ENCODE measurements at regions of chr21 and their contacts with region 1.

Region 1: DNA sequence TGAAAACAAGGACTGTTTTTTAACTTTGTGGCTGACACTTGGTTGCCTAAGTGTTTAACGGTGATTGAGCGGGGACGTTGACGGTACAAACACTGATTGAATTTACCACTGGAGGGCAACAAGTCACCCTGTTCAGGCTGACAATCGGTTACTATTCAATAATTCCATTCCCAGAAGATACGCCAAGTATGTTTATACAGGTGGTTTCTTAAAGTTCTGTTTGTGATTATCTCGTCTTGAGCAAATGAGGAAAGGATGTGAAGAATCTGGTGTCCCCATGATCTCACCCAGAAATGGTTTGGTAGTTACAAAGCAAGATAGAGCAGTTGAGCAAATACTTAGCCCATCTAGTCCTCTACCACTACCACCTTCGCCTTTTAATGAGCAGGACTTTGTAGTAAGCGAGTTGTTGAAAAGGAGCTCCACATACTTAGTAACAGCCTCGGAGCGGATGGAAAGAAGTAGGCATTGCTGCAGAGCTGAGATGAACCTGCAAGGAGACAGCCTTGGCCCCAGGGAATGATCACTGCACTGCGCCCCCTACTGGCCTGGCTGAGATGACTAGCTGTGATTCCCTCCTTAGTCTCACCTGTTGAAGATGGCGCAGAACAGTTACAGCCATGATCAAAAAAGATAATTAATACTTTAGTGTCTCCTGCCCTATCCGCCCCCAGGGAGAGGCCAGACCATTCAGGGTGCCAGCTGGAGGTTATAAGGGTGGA is 36.3 kb downstream of the IFNAR1 start:
- DNase-seq: peak; percentile 94
- ATAC-seq: peak; percentile 88
- H3K4me3 Mint-ChIP-seq: peak overlapping the region; percentile 72
- H3K27ac Mint-ChIP-seq: peak overlapping the region; percentile 75
- H3K4me1 Mint-ChIP-seq: peaks cover 16% of the 10 kb centered on the region
- H3K27me3 Mint-ChIP-seq: no peaks in the 10 kb centered on the region

Region 2: DNA sequence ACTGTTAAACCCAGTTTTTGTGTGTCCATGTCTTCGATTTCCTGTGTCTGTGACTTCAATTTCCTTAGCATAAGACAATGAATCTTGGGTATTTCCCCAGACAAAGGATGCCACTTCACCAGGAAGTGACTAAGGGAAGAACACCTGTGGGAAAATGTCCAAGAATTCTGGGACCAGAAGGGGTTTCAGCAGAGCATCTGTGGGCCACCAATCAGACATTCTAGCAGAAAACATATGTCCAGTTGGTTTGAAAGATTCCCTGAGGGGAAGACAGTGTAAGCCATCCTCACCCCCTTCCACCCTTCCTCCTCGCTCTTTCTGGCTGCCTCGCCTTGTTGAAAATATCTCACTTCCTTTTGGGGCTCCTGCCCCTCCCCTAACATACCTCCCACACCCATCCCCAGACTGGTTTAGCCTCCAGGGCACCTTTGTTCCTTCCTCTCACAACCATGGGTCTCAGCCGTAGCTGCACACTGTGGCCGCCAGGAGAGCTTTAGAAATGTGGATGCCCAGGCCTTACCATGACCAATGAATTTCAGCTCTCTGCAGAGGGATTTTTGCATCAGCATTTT is 61.8 kb before region 1 on chr21:
- CTCF ChIA-PET with region 1: interaction called, 11 read pairs
- POLR2A ChIA-PET with region 1: no interaction called
- intact Hi-C with region 1: no loop called
- DNase-seq: peak; percentile 69
- ATAC-seq: peak; percentile 90
- H3K4me3 Mint-ChIP-seq: peak overlapping the region; percentile 19
- H3K27ac Mint-ChIP-seq: peak overlapping the region; percentile 85
- H3K4me1 Mint-ChIP-seq: peaks cover 44% of the 10 kb centered on the region
- H3K27me3 Mint-ChIP-seq: no peaks in the 10 kb centered on the region

Region 3: GRCh38 chr21:33332143-33332542 is 28.9 kb before region 1 on chr21:
- CTCF ChIA-PET with region 1: interaction called, 12 read pairs
- POLR2A ChIA-PET with region 1: no interaction called
- intact Hi-C with region 1: no loop called
- DNase-seq: no peak
- ATAC-seq: peak; percentile 51
- H3K4me3 Mint-ChIP-seq: no peak overlapping the region
- H3K27ac Mint-ChIP-seq: peak overlapping the region; percentile 1
- H3K4me1 Mint-ChIP-seq: peaks cover 65% of the 10 kb centered on the region
- H3K27me3 Mint-ChIP-seq: no peaks in the 10 kb centered on the region

Region 4: GRCh38 chr21:33374450-33375096 is 13.5 kb after region 1 on chr21:
- CTCF ChIA-PET with region 1: interaction called, 24 read pairs
- POLR2A ChIA-PET with region 1: no interaction called
- intact Hi-C with region 1: no loop called
- DNase-seq: peak; percentile 75
- ATAC-seq: peak; percentile 83
- H3K4me3 Mint-ChIP-seq: no peak overlapping the region
- H3K27ac Mint-ChIP-seq: no peak overlapping the region
- H3K4me1 Mint-ChIP-seq: peaks cover 13% of the 10 kb centered on the region
- H3K27me3 Mint-ChIP-seq: peaks cover 2% of the 10 kb centered on the region

Region 5: GRCh38 chr21:33434770-33435360 is 73.8 kb after region 1 on chr21:
- CTCF ChIA-PET with region 1: interaction called, 17 read pairs
- POLR2A ChIA-PET with region 1: interaction called, 4 read pairs
- intact Hi-C with region 1: loop called in 1 of 2 experiments (anchors 2 kb)
- DNase-seq: peak; percentile 53
- ATAC-seq: peak; percentile 96
- H3K4me3 Mint-ChIP-seq: peak overlapping the region; percentile 4
- H3K27ac Mint-ChIP-seq: peak overlapping the region; percentile 59
- H3K4me1 Mint-ChIP-seq: peaks cover 26% of the 10 kb centered on the region
- H3K27me3 Mint-ChIP-seq: no peaks in the 10 kb centered on the region

Region 6: GRCh38 chr21:33514229-33514628 is 153.2 kb after region 1 on chr21:
- CTCF ChIA-PET with region 1: no interaction called
- POLR2A ChIA-PET with region 1: no interaction called
- intact Hi-C with region 1: no loop called
- DNase-seq: no peak
- ATAC-seq: peak; percentile 71
- H3K4me3 Mint-ChIP-seq: no peak overlapping the region
- H3K27ac Mint-ChIP-seq: peak overlapping the region; percentile 55
- H3K4me1 Mint-ChIP-seq: peaks cover 13% of the 10 kb centered on the region
- H3K27me3 Mint-ChIP-seq: no peaks in the 10 kb centered on the region

Region 7: DNA sequence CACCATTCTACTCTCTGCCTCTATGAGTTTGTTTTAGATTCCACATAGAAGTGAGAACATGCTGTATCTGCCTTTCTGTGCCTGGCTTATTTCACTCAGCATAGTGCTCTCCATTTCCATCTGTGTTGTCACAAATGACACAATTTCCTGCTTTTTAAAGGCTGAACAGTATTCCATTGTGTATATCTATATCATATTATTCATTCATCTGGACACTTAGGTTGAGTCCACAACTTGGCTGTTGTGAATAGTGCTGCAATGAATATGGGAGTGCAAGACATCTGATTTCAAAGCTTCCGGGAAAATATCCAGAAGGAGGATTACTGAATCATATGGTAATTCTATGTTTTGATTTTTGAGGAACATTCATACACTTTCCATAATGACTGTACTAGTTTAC is 247.5 kb after region 1 on chr21:
- CTCF ChIA-PET with region 1: no interaction called
- POLR2A ChIA-PET with region 1: no interaction called
- intact Hi-C with region 1: loop called in 1 of 2 experiments (anchors 10 kb)
- DNase-seq: no peak
- ATAC-seq: no peak
- H3K4me3 Mint-ChIP-seq: no peak overlapping the region
- H3K27ac Mint-ChIP-seq: no peak overlapping the region
- H3K4me1 Mint-ChIP-seq: peaks cover 4% of the 10 kb centered on the region
- H3K27me3 Mint-ChIP-seq: no peaks in the 10 kb centered on the region